Activated CD4-positive, alpha-beta T cell treated with anti-CD3 and anti-CD28 coated beads for 36 hours (primary cell): ENCODE measurements at regions of chr7 and their contacts with region 1.

Region 1: DNA sequence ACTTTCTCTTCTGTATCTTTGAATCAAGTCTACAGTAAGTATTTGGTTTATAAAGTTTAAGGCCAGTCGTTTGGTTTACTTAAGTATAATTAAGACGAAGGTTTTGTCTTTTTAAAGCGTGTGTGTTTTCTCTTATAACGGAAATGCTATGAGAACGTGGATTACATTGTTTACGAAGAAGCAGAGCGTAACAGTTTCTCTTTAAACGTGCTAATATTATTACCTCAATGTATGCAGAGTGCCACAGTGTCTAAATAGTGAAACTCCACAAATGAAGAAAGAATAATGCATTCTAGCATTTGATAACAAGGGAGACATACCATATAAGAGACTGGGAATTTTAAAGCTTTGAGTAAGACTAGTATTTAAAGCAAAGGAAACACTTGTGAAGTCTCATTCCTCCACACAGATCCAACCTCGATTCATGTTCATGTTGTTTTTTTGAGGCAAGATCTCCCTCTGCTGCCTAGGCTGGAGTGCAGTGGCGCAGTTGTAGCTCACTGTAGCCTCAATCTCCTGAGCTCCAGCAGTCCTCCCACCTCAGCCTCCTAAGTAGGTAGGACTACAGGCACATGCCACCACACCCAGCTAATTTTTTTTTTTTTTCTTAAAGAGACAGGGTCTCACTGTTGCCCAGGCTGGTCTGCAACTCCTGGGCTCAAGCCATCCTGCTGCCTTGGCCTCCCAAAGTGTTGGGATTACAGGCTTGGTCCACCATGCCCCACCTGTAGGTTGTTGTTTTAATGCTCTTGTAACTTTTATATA is 75.1 kb downstream of the ANKRD61 start:
- DNase-seq: peak; percentile 63
- ATAC-seq: peak; percentile 25
- H3K4me3 Mint-ChIP-seq: peak overlapping the region; percentile 82
- H3K27ac Mint-ChIP-seq: peak overlapping the region; percentile 87
- H3K4me1 Mint-ChIP-seq: peaks cover 37% of the 10 kb centered on the region
- H3K27me3 Mint-ChIP-seq: no peaks in the 10 kb centered on the region

Region 2: DNA sequence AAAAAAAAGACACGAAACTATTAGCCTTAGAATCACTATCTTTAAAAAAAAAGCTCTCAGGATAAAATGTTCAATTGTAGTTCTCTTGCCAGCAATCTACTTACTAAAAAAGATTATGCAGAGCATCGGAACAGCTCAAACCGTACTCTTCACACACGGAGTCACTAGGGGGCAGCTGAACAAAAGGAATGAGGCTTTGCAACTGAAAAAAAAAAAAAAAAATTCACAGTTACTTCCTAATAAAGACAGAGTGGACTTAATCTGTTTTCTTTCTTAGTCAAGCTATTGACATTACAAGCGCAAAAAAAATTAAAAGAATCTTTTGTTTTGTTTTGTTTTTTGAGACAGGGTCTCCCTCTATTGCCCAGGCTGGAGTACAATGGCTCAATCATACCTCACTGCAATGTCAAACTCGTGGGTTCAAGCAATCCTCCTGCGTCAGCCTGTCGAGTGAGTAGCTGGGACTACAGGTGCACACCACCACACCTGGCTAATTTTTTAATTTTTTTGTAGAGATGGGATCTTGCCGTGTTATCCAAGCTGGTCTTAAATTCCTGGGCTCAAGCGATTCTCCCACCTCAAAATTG is 109.0 kb before region 1 on chr7:
- CTCF ChIA-PET with region 1: interaction called, 11 read pairs
- POLR2A ChIA-PET with region 1: no interaction called
- intact Hi-C with region 1: no loop called
- DNase-seq: peak; percentile 54
- ATAC-seq: peak; percentile 55
- H3K4me3 Mint-ChIP-seq: no peak overlapping the region
- H3K27ac Mint-ChIP-seq: no peak overlapping the region
- H3K4me1 Mint-ChIP-seq: no peaks in the 10 kb centered on the region
- H3K27me3 Mint-ChIP-seq: no peaks in the 10 kb centered on the region

Region 3: DNA sequence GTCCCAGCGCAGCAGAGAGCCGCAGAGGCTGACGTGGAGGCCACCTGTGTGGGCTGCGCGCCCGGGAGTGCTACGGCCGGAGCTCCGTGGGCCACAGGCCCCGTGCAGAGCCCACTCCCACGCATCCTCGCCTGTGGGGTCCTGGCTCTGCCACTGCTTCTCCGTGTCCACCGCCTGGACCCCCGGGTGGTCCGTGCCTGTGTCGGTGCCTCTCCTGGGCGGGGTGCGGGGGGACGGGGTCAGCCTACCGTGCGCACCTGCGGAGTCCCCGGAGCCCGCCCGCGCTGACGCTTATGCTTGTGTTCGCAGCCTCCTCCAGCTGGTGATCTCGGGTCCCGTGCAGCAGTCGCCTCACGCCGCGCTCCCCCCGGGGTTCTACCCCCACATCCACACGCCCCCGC is 501.3 kb after region 1 on chr7:
- CTCF ChIA-PET with region 1: no interaction called
- POLR2A ChIA-PET with region 1: no interaction called
- intact Hi-C with region 1: no loop called
- DNase-seq: no peak
- ATAC-seq: no peak
- H3K4me3 Mint-ChIP-seq: no peak overlapping the region
- H3K27ac Mint-ChIP-seq: no peak overlapping the region
- H3K4me1 Mint-ChIP-seq: no peaks in the 10 kb centered on the region
- H3K27me3 Mint-ChIP-seq: no peaks in the 10 kb centered on the region